Activated naive CD8-positive, alpha-beta T cell treated with anti-CD3 and anti-CD28 coated beads, Interleukin-2, amount 10 ng/mL, durations not matched to agents 7 days and 5 days (primary cell): ENCODE measurements at regions of chr2 and their contacts with region 1.

Region 1: DNA sequence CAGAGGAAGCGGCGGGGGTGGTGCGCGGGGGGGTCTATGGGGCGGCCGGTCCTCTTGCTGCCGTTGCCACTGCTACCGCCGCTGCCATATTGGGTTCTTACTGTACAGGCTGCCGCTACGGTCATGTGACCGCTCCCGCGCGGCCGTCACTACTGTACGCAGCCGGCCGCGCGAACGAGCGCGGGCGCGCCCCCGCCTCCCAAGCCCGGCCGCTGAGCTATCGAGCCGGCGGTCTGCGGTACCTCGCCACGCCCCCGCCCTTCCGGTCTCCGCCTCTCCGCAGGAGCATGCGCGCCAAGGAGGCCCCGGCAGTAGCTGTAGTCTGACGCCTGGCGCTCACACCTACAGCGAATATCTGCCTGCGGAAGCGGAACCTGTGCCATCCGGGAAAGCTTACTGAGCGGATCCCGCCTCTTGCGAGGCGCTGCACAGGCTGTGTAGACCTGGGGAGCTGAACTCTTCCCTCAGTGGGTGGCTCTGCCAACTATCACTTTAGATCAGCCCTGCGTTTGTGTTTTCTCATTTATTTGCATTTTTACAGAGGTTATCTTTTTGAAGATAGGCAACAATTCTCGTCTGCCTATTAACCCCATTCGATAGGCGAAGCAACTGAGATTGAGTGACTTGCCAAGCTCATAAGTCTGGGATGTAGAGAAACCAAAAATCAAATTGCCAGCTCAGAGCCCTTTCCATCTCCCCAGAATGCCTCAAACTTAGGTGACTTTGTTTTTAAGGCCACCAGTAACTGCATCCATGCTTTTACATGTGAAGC is at the start of gene ASXL2:
- DNase-seq: peak; percentile 99
- ATAC-seq: peak; percentile 91
- H3K4me3 Mint-ChIP-seq: peak within 1 kb of the TSS; percentile 95
- H3K27ac Mint-ChIP-seq: peak within 1 kb of the TSS; percentile 95
- H3K4me1 Mint-ChIP-seq: peaks cover 31% of the 10 kb centered on the region
- H3K27me3 Mint-ChIP-seq: no peaks in the 10 kb centered on the region
- total RNA-seq, gene ASXL2: 47.9 to 58.5 TPM

Region 2: GRCh38 chr2:25673300-25674076 is 205.1 kb before region 1 on chr2 and contains the start of gene DTNB:
- POLR2A ChIA-PET with region 1: interaction called, 13 read pairs
- DNase-seq: peak; percentile 89
- ATAC-seq: peak; percentile 80
- H3K4me3 Mint-ChIP-seq: peak within 1 kb of the TSS; percentile 86
- H3K27ac Mint-ChIP-seq: peak within 1 kb of the TSS; percentile 76
- H3K4me1 Mint-ChIP-seq: peaks cover 21% of the 10 kb centered on the region
- H3K27me3 Mint-ChIP-seq: peaks cover 22% of the 10 kb centered on the region
- total RNA-seq, gene DTNB: 36.7 to 38.3 TPM

Region 3: GRCh38 chr2:25851740-25852503 is 26.6 kb before region 1 on chr2:
- POLR2A ChIA-PET with region 1: interaction called, 28 read pairs
- DNase-seq: no peak
- ATAC-seq: peak; percentile 84
- H3K4me3 Mint-ChIP-seq: peak overlapping the region; percentile 76
- H3K27ac Mint-ChIP-seq: peak overlapping the region; percentile 85
- H3K4me1 Mint-ChIP-seq: peaks cover 39% of the 10 kb centered on the region
- H3K27me3 Mint-ChIP-seq: no peaks in the 10 kb centered on the region

Region 4: DNA sequence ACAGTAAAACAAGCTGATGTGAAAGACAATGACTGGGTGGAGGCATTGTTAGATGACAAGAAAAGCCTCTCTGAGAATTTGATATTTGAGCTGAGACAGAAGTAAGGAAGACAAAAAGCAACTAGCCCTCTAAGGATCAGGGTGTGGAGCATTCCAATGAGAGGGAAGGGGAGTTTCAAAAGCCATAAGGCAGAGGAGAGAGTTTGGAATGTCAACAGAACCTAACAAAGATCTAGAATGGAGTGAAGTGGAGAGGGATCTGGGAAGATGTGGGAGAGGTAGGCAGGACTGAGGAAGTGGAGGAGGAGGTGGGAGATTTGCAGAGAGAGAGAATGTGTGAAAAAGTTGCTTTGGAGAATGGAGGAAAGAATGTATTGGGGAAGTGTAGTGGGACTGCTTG is 17.1 kb after region 1 on chr2:
- POLR2A ChIA-PET with region 1: no interaction called
- DNase-seq: no peak
- ATAC-seq: no peak
- H3K4me3 Mint-ChIP-seq: no peak overlapping the region
- H3K27ac Mint-ChIP-seq: no peak overlapping the region
- H3K4me1 Mint-ChIP-seq: no peaks in the 10 kb centered on the region
- H3K27me3 Mint-ChIP-seq: peaks cover 8% of the 10 kb centered on the region

Region 5: DNA sequence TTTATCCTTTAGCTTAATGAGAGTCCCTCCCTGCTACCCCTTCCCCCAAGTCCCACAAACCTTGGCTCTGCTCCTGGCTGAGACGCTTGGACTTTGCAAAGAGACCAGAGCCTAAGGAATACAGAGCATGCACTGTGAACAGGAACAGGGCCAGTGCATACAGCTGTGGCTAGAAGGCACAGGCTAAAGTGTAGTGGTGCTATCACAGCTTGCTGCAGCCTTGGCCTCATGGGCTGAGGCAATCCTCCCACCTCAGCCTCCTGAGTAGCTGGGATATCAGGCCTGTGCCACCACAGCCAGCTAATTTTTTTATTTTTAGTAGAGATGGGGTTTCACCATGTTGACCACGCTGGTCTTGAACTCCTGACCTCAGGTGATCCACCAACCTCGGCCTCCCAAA is 39.3 kb after region 1 on chr2:
- POLR2A ChIA-PET with region 1: interaction called, 28 read pairs
- DNase-seq: no peak
- ATAC-seq: no peak
- H3K4me3 Mint-ChIP-seq: no peak overlapping the region
- H3K27ac Mint-ChIP-seq: no peak overlapping the region
- H3K4me1 Mint-ChIP-seq: peaks cover 12% of the 10 kb centered on the region
- H3K27me3 Mint-ChIP-seq: peaks cover 16% of the 10 kb centered on the region

Region 6: DNA sequence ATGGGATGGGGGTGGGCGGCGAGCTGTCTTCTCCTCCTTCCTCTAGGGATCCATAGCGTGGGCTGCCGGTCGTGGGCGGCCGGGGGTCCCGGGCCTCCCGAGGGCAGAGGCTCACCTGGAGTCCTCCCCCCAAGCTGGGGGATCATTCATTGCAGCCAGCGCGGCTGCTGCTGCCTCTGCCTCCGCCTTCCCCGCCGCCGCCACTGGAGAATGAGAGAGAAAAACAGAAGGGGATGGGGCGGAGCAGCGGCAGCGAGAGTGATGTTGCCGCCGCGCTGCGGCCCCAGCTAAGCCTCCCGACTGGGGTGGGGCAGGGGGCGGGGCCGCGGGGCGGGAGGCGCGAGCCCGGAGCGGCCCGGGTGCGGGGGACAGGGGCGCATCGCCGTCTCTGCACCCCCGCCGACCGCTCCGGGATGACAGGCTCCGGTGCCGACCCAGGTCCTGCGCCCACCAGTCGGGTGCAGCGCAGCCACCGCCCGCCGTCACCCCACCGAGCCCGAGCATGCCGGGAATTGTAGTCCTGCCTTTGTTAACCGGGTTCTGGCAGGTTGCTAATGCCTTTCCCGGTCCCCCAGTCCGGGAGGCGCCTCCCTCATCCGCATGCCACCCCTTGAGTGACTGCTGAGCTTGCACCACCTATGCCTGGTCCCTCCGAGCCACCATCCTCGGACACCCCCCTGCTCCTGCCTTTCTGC is 103.9 kb after region 1 on chr2 and contains the start of gene KIF3C:
- POLR2A ChIA-PET with region 1: interaction called, 10 read pairs
- DNase-seq: peak; percentile 82
- ATAC-seq: peak; percentile 92
- H3K4me3 Mint-ChIP-seq: peak within 1 kb of the TSS; percentile 91
- H3K27ac Mint-ChIP-seq: peak within 1 kb of the TSS; percentile 82
- H3K4me1 Mint-ChIP-seq: peaks cover 11% of the 10 kb centered on the region
- H3K27me3 Mint-ChIP-seq: no peaks in the 10 kb centered on the region
- total RNA-seq, gene KIF3C: 11.6 to 12.8 TPM

Region 7: GRCh38 chr2:26001743-26002351 is 123.3 kb after region 1 on chr2:
- POLR2A ChIA-PET with region 1: no interaction called
- DNase-seq: no peak
- ATAC-seq: no peak
- H3K4me3 Mint-ChIP-seq: no peak overlapping the region
- H3K27ac Mint-ChIP-seq: no peak overlapping the region
- H3K4me1 Mint-ChIP-seq: peaks cover 2% of the 10 kb centered on the region
- H3K27me3 Mint-ChIP-seq: peaks cover 4% of the 10 kb centered on the region